ENCODE measurements at regions of chr20 and their contacts with region 1.

Region 1: GRCh38 chr20:53915446-53916172 is 154.8 kb downstream of the BCAS1 start:
- DNase-seq: peak; percentile 95
- ATAC-seq: peak; percentile 98
- H3K4me3 ChIP-seq: peak overlapping the region; percentile 71
- H3K27ac ChIP-seq: peak overlapping the region; percentile 90
- H3K4me1 ChIP-seq: peaks cover 29% of the 10 kb centered on the region
- H3K27me3 ChIP-seq: no peaks in the 10 kb centered on the region
- CTCF ChIP-seq: peak; percentile 91

Region 2: DNA sequence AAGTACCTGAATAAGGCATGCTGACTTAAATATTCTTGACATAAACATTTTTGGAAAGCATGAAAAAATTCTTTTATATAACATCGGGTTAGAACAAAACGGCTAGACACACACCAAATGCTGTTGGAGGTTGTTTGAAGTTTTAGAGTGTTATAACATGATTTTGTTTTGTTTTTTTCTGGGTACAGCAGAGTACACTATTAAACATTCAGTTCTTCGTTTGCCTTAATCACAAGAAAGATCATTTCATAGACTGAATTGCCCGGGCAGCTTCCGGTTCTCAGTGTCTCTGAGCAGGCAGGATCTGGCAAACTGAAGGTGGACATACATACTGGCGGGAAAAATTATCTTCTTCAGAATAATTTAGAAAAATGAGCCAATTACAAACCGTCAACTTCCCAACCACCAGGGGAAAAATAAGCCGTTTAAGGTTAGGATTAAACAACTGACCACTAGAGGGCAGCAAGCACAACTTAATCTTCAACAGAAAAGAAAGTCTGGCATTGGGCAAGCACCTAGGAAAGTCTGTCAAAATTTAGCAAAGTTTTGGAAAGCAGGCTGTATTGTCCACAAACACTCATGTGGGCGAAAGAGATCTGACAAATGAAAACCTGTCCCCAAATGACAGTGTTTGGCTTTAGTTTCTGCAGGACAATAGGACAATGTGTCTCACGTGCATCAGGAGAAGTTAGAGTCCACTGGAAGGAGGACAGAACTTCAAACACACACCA is 337.0 kb before region 1 on chr20:
- intact Hi-C with region 1: loop called (anchors 10 kb)
- DNase-seq: no peak
- ATAC-seq: peak; percentile 83
- H3K4me3 ChIP-seq: peak overlapping the region; percentile 30
- H3K27ac ChIP-seq: peak overlapping the region; percentile 74
- H3K4me1 ChIP-seq: peaks cover 42% of the 10 kb centered on the region
- H3K27me3 ChIP-seq: no peaks in the 10 kb centered on the region
- CTCF ChIP-seq: peak; percentile 82

Region 3: DNA sequence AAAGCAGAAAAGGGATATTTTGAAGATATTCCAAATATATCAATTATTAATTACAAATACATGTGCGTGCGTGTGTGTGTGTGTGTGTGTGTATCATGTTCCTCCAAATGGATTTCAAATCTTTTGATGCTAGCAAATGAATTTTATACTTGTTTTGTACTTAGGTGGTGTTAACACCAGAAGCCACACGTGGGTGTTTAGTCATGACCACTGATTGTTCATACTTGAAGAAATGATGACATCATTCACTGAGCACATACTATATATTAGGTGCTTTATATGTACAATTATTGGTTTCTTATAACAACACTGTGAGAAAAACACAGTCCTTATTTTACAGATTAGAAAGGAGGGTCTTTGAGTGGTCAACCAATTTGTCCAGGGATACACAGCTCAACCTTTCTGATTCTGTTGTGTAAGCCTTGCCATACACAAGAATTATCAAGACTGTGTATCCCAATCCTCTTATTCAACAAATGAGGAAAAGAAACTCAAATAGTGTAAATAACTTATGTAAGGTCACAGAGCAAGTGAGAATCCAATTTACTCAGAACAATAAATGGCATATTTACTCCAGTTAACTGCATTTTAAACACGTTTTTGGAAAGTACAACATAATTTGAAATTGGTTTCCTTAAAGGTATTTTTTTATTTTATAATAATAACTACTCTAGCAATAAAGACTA is 66.3 kb after region 1 on chr20:
- intact Hi-C with region 1: no loop called
- DNase-seq: no peak
- ATAC-seq: no peak
- H3K4me3 ChIP-seq: no peak overlapping the region
- H3K27ac ChIP-seq: no peak overlapping the region
- H3K4me1 ChIP-seq: peaks cover 4% of the 10 kb centered on the region
- H3K27me3 ChIP-seq: no peaks in the 10 kb centered on the region
- CTCF ChIP-seq: no peak

Measured in upper lobe of right lung (tissue), 1 donor.